Activated naive CD4-positive, alpha-beta T cell treated with anti-CD3 and anti-CD28 coated beads for 36 hours (primary cell): ENCODE measurements at regions of chr12 and their contacts with region 1.

Region 1: GRCh38 chr12:24838531-24838950 is 110.4 kb downstream of the BCAT1 start:
- DNase-seq: peak; percentile 45
- H3K4me3 Mint-ChIP-seq: no peak overlapping the region
- H3K27ac Mint-ChIP-seq: peak overlapping the region; percentile 83
- H3K4me1 Mint-ChIP-seq: peaks cover 32% of the 10 kb centered on the region
- H3K27me3 Mint-ChIP-seq: peaks cover 11% of the 10 kb centered on the region

Region 2: DNA sequence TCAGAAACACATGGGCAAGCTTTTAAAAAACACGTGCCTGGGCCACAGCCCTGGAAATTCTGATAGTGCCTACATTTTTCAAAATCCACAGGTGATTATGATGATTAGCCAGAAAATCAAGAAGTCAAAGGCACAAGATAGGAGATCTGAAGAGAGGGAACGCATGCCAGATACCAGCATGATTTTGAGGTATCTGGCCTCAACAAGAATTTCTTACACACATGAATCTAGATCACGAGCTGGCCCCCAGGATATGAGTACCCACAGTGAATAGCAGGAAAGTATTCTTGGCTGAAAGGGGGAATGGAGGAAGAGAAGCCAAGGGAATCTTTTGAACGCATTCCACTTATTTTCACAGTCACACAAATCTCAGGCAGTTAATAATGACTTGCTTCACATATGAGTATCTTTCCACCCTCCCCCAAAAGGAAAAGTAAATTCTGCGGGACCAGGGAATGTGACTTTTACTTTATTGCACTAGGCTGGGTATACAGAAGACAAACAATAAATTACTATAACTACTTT is 327.9 kb before region 1 on chr12:
- CTCF ChIA-PET with region 1: no interaction called
- intact Hi-C with region 1: no loop called
- DNase-seq: no peak
- H3K4me3 Mint-ChIP-seq: no peak overlapping the region
- H3K27ac Mint-ChIP-seq: no peak overlapping the region
- H3K4me1 Mint-ChIP-seq: no peaks in the 10 kb centered on the region
- H3K27me3 Mint-ChIP-seq: peaks cover 3% of the 10 kb centered on the region

Region 3: GRCh38 chr12:24561882-24562760 is 276.4 kb before region 1 on chr12:
- CTCF ChIA-PET with region 1: no interaction called
- intact Hi-C with region 1: loop called (anchors 2 kb)
- DNase-seq: peak; percentile 24
- H3K4me3 Mint-ChIP-seq: peak overlapping the region; percentile 78
- H3K27ac Mint-ChIP-seq: peak overlapping the region; percentile 46
- H3K4me1 Mint-ChIP-seq: peaks cover 13% of the 10 kb centered on the region
- H3K27me3 Mint-ChIP-seq: peaks cover 64% of the 10 kb centered on the region

Region 4: GRCh38 chr12:24754690-24755638 is 83.6 kb before region 1 on chr12:
- CTCF ChIA-PET with region 1: no interaction called
- intact Hi-C with region 1: loop called (anchors 1 kb)
- DNase-seq: peak; percentile 25
- H3K4me3 Mint-ChIP-seq: no peak overlapping the region
- H3K27ac Mint-ChIP-seq: peak overlapping the region; percentile 74
- H3K4me1 Mint-ChIP-seq: peaks cover 12% of the 10 kb centered on the region
- H3K27me3 Mint-ChIP-seq: peaks cover 19% of the 10 kb centered on the region

Region 5: DNA sequence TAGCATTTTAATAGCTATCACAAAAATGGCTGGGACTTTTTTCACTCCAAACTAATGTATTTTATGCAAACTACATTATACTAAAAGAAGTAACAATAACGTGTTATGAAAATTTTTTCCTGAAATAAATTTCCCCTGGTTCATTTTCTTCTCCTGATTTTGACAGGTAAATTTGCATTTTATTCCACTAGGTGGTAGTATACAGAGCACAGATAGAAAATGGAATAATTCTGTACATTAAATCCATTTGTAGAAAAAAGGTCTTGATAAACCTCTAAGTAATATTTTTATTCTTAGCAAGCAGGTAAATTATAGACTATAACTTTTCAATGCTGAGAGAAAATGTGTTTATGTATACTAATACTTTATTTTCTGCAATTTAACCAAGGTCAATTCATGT is 13.9 kb after region 1 on chr12:
- CTCF ChIA-PET with region 1: interaction called, 27 read pairs
- intact Hi-C with region 1: no loop called
- DNase-seq: no peak
- H3K4me3 Mint-ChIP-seq: no peak overlapping the region
- H3K27ac Mint-ChIP-seq: no peak overlapping the region
- H3K4me1 Mint-ChIP-seq: peaks cover 17% of the 10 kb centered on the region
- H3K27me3 Mint-ChIP-seq: peaks cover 20% of the 10 kb centered on the region

Region 6: DNA sequence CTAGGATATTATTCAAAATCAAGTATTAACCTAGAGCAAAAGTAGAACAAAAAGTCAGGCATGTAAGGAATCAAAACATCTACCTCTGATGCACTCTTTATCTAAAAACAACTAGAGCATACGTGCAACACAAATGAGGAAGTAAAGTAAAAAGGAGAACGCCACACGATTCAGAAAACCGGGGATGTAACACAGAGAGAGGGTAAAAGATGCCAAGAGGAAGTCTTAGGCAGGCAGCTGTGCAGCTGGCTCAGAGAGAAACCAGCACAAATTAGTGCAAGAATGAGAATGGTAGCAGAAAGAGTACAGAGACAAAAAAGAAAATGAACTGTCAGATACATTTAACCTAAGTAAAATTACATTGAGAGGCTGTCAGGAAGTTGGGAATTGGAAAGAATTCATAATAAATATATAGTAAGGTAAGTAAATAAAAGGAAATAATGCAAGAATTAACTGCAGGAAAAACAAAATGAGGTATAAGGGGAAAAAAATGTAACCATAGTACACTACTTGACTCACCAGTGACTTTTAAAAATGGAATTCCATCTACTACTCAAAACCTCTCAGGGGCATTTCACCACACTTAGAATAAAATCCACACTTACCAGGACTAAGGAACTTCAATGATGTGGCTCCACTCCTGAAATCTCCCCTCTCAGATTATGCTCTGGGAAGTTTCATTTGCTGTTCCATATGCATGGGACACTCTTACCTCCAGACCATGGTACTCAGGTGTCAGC is 93.3 kb after region 1 on chr12:
- CTCF ChIA-PET with region 1: no interaction called
- intact Hi-C with region 1: no loop called
- DNase-seq: no peak
- H3K4me3 Mint-ChIP-seq: no peak overlapping the region
- H3K27ac Mint-ChIP-seq: no peak overlapping the region
- H3K4me1 Mint-ChIP-seq: peaks cover 9% of the 10 kb centered on the region
- H3K27me3 Mint-ChIP-seq: peaks cover 40% of the 10 kb centered on the region

Region 7: DNA sequence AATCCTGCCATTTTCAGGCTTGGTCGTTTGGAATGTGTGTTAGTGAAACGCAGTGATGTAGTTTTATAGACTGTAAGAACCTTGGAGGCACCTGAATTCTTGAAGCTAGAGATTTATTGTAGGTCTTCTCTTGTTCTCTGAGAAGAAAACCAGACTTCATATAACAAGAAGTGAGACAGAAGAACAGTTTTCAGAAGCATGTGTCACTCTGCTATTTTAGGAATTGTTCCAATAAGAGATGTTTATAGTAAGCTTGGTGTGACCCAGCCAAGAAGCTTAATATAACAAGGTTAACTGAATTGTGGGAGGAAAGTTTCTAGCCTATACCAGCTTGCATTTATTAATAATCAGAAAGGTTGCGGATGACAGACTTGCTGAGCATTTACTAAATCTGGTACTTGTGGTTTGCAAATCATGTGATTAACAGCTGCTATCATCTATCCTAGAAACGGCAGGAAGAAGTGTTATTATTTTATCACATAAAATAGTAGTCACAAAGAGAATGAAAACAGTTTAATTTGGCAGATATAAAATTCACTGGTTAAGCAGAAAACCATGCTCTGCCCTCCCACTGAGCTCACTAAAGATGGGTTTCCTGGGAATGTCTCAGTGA is 159.5 kb after region 1 on chr12:
- CTCF ChIA-PET with region 1: no interaction called
- intact Hi-C with region 1: loop called (anchors 1 kb)
- DNase-seq: peak; percentile 20
- H3K4me3 Mint-ChIP-seq: no peak overlapping the region
- H3K27ac Mint-ChIP-seq: peak overlapping the region; percentile 75
- H3K4me1 Mint-ChIP-seq: peaks cover 36% of the 10 kb centered on the region
- H3K27me3 Mint-ChIP-seq: no peaks in the 10 kb centered on the region

Region 8: GRCh38 chr12:26088993-26089392 is 1250.5 kb after region 1 on chr12:
- CTCF ChIA-PET with region 1: no interaction called
- intact Hi-C with region 1: no loop called
- DNase-seq: peak; percentile 7
- H3K4me3 Mint-ChIP-seq: no peak overlapping the region
- H3K27ac Mint-ChIP-seq: no peak overlapping the region
- H3K4me1 Mint-ChIP-seq: no peaks in the 10 kb centered on the region
- H3K27me3 Mint-ChIP-seq: no peaks in the 10 kb centered on the region

Region 9: GRCh38 chr12:26748741-26749431 is 1910.3 kb after region 1 on chr12:
- CTCF ChIA-PET with region 1: no interaction called
- intact Hi-C with region 1: loop called (anchors 1 kb)
- DNase-seq: no peak
- H3K4me3 Mint-ChIP-seq: peak overlapping the region; percentile 12
- H3K27ac Mint-ChIP-seq: peak overlapping the region; percentile 88
- H3K4me1 Mint-ChIP-seq: peaks cover 64% of the 10 kb centered on the region
- H3K27me3 Mint-ChIP-seq: no peaks in the 10 kb centered on the region